Activated naive CD4-positive, alpha-beta T cell treated with anti-CD3 and anti-CD28 coated beads for 36 hours (primary cell): ENCODE measurements at regions of chr16 and their contacts with region 1.

Region 1: DNA sequence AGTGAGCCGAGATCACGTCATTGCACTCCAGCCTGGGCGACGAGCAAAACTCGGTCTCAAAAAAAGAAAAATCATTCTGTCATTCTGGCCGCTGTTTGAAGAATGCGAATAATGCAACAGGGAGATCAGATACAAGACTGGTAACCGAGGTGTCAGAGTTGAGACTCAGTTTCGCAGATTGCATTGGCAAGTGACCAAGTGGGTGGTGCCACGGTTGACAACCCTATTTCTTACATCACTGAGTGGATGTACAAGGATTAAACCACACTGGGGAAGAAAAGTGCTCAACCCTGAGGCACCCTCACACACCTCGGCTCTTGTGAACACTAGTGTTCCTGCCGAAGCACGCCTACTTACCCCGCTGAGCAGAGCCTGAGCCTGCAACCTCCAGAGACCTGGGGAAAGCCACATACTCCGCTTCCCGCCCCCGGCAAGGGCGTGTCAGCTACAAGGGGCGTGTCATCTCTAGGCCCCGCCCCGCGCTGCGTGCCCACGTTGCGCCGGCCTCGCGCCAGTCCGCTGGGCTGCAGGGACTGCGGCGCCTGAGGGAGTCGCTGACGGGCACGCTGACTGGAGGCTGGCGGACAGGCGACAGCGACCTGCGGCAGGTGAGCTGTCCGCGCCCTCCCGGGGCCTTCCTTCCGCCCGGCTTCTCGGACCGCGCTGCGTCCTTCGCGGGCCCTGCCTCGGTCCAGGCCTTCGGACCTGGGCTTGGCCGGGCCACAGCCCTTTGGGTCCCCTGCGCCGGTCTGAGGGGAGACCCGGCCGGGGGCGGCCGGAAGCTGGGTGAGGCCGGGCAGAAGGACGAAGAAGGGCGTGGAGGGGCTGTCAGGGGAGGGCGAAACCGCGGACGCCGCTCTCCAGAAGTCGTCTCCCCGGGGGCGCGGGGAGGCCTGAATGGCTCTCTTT is at the start of gene HMOX2:
- DNase-seq: peak; percentile 95
- H3K4me3 Mint-ChIP-seq: peak within 1 kb of the TSS; percentile 89
- H3K27ac Mint-ChIP-seq: peak within 1 kb of the TSS; percentile 82
- H3K4me1 Mint-ChIP-seq: peaks cover 42% of the 10 kb centered on the region
- H3K27me3 Mint-ChIP-seq: no peaks in the 10 kb centered on the region
- total RNA-seq, gene HMOX2: 46.8 to 49.3 TPM

Region 2: DNA sequence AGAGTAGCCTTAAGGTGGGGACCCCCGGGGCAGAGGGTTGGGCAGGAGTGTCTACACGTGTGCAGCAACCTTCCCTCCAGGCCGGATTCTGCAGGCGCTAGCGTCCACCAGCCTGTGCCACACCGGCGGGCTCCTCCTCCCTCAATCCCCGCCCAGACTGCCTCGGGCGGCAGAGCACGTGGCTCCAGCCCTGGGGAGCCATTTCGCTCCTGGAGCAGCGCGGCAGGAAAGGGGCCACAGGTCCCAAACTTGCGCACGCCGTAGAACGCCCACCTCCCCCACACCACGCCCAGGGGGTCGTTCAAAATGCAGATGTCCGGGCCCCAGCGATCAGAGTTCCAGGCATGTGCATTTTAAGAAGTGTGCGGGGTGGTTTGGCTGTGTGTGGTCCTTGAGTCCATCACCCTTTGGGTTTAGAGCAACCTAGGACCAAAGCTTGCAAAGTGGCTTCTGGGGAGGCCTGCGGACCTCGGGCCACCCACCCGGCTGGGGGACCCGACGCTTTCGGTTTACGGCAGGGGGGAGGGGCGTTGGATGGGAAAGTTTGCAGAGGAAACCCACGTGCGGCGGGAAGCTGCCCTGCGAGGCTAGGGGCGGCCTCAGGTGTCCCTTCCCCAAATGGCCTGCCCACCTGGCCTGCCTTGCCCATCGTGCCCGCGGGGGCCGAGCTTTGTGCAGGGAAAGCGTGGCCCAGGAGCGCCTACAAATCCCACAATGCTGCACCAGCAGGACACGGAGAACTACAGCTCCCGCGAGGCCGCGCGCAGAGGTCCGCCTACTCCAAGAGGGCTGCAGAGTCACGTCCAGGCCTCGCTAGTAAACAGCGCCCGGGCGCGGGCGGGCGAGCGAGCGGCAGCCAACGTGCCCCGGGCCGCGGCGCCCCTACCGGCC is 204.7 kb before region 1 on chr16:
- CTCF ChIA-PET with region 1: no interaction called
- intact Hi-C with region 1: loop called (anchors 5 kb)
- DNase-seq: peak; percentile 95
- H3K4me3 Mint-ChIP-seq: peak overlapping the region; percentile 86
- H3K27ac Mint-ChIP-seq: peak overlapping the region; percentile 94
- H3K4me1 Mint-ChIP-seq: peaks cover 12% of the 10 kb centered on the region
- H3K27me3 Mint-ChIP-seq: no peaks in the 10 kb centered on the region

Region 3: GRCh38 chr16:4350787-4351659 is 125.1 kb before region 1 on chr16 and contains the start of gene PAM16:
- CTCF ChIA-PET with region 1: interaction called, 3 read pairs
- intact Hi-C with region 1: loop called (anchors 2 kb)
- DNase-seq: peak; percentile 98
- H3K4me3 Mint-ChIP-seq: peak within 1 kb of the TSS; percentile 98
- H3K27ac Mint-ChIP-seq: peak within 1 kb of the TSS; percentile 84
- H3K4me1 Mint-ChIP-seq: peaks cover 40% of the 10 kb centered on the region
- H3K27me3 Mint-ChIP-seq: no peaks in the 10 kb centered on the region
- total RNA-seq, gene PAM16: 67.8 to 71.3 TPM

Region 4: GRCh38 chr16:4425378-4426020 is 50.6 kb before region 1 on chr16 and contains the start of gene DNAJA3:
- CTCF ChIA-PET with region 1: no interaction called
- intact Hi-C with region 1: loop called (anchors 1 kb)
- DNase-seq: peak; percentile 93
- H3K4me3 Mint-ChIP-seq: peak within 1 kb of the TSS; percentile 99
- H3K27ac Mint-ChIP-seq: peak within 1 kb of the TSS; percentile 100
- H3K4me1 Mint-ChIP-seq: peaks cover 39% of the 10 kb centered on the region
- H3K27me3 Mint-ChIP-seq: no peaks in the 10 kb centered on the region
- total RNA-seq, gene DNAJA3: 86.7 to 88.0 TPM

Region 5: GRCh38 chr16:4538350-4539235 is 62.5 kb after region 1 on chr16 and contains the start of gene CDIP1:
- CTCF ChIA-PET with region 1: interaction called, 4 read pairs
- intact Hi-C with region 1: loop called (anchors 1 kb)
- DNase-seq: peak; percentile 99
- H3K4me3 Mint-ChIP-seq: peak within 1 kb of the TSS; percentile 77
- H3K27ac Mint-ChIP-seq: peak within 1 kb of the TSS; percentile 54
- H3K4me1 Mint-ChIP-seq: peaks cover 41% of the 10 kb centered on the region
- H3K27me3 Mint-ChIP-seq: no peaks in the 10 kb centered on the region
- total RNA-seq, gene CDIP1: 31.9 to 35.7 TPM

Region 6: DNA sequence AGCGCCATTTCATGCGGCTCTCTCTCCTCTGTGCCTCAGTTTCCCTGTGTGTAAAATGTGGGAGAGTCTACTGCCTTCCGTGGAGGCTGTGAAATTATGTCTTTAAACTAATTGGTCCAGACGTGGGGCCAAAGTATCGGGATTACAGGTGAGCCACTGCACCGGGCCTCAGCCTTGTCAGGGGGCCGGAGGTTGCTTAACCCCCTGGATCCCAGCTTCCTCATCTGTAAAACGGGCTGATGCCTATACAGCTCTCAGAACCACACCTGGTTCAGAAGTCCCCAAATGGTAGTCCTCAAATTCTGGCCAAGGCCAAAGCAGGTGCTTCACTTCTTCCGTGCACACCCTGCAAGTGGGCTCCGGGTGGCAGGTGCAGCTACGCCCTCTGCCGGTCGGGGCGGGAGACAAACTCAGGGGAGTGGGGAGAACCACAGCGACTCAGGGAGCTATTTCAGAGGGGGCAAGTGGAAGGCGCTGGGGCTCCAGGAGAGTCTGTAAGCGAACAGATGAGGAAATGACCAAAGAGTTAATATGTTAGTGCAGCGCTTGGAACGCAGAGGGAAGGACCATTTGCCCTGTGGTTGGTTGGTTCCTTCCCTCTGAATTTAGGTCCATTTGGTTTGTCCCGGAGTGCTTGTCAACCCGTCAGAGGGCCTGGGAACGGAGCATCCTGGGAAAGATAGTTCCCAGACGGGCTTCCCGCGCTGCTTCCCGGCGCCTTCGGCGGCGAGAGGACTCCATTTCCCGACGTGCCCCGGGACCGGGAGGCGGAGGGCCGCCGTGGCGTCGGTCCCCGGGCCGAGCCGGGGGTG is 148.1 kb after region 1 on chr16 and contains the start of gene MGRN1:
- CTCF ChIA-PET with region 1: interaction called, 3 read pairs
- intact Hi-C with region 1: loop called (anchors 1 kb)
- DNase-seq: peak; percentile 96
- H3K4me3 Mint-ChIP-seq: peak within 1 kb of the TSS; percentile 97
- H3K27ac Mint-ChIP-seq: peak within 1 kb of the TSS; percentile 99
- H3K4me1 Mint-ChIP-seq: peaks cover 30% of the 10 kb centered on the region
- H3K27me3 Mint-ChIP-seq: no peaks in the 10 kb centered on the region
- total RNA-seq, gene MGRN1: 46.3 to 48.8 TPM

Region 7: GRCh38 chr16:4693296-4693955 is 217.3 kb after region 1 on chr16 and contains the start of gene NUDT16L1:
- CTCF ChIA-PET with region 1: no interaction called
- intact Hi-C with region 1: loop called (anchors 5 kb)
- DNase-seq: peak; percentile 96
- H3K4me3 Mint-ChIP-seq: peak within 1 kb of the TSS; percentile 83
- H3K27ac Mint-ChIP-seq: peak within 1 kb of the TSS; percentile 65
- H3K4me1 Mint-ChIP-seq: peaks cover 14% of the 10 kb centered on the region
- H3K27me3 Mint-ChIP-seq: no peaks in the 10 kb centered on the region
- total RNA-seq, gene NUDT16L1: 20.0 to 20.7 TPM